ENCODE measurements at regions of chr2 and their contacts with region 1.

Region 1: GRCh38 chr2:120693121-120693520 is 42.5 kb upstream of the GLI2 start:
- DNase-seq: no peak
- ATAC-seq: no peak
- H3K4me3 ChIP-seq: no peak overlapping the region
- H3K27ac ChIP-seq: no peak overlapping the region
- H3K4me1 ChIP-seq: no peaks in the 10 kb centered on the region
- H3K27me3 ChIP-seq: peaks cover 0 to 29% (median 4%) of the 10 kb centered on the region in 3 donors
- CTCF ChIP-seq: no peak

Region 2: DNA sequence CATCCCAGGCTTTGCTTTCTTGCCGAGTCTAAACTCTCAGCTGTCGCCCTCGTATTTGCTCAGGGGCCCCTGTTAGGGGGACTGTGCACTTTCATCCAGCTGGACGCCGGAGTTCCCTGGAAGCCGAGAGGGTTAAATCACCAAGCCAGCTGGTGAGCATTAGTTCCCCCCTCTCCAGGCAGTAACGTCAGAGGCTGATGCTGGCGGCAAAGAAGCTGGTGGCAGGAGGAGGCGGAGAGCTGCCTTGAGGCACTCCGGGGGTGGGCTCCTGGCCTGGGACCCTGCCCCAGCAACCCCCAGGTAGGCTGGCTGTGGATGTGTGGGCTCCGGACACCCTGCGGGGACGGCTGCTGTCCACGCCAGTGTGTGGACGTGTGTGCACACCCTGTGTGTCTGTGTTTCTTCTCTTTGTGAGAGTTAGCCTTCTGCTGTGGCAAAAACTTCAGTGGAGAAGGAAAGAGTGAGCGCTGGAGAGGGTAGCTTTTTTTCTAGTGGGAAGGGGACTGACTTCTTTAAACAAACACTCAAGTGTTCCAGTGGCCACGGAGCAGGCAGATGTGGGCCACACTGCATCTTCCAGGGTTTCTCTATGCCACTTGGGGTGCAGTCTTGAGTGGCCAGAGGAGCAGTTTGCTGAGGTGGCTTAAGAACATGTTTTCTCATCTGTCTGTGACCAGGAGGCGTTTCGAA is 127.3 kb after region 1 on chr2:
- intact Hi-C with region 1: no loop called
- DNase-seq: peak in 1 of 2 donors; percentile 59
- ATAC-seq: peak in 2 of 4 donors; percentile 21 to 40
- H3K4me3 ChIP-seq: no peak overlapping the region
- H3K27ac ChIP-seq: peak overlapping the region; percentile 36
- H3K4me1 ChIP-seq: no peaks in the 10 kb centered on the region
- H3K27me3 ChIP-seq: peaks cover 0 to 3% (median 0%) of the 10 kb centered on the region in 3 donors
- CTCF ChIP-seq: no peak

Region 3: DNA sequence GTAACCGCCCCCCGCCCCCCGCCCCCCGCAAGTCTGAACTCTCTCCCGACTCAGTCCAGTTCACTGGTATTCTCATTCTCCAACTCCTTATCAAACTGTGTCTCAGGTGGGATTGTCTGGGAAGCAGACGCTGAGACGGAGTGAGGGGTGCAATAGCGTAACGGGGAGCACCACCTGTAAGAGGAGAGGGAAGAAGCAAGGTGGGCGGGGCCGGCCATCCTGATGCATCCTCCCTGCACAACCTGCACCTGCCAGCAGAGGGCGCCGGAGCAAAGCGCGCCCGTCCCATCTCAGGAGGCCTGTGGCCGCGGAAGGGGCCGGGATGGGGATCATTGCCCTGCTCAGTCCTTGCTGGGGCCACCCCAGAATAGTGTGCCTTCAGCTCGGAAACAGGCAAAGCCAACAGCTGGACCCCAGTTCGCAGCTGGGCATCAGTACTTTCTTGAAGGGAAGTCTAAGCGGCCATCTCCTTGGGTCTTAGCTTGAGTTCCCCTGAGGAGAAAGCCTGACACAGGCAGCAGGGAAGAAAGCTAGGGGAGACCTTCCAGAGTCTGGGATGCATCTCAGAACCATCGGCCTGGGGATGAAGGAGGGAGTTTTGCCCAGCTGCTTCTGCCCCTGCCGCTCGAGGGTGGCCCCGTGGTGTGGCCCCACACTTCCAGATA is 383.9 kb after region 1 on chr2:
- intact Hi-C with region 1: loop called in 1 of 2 experiments (anchors 1 kb)
- DNase-seq: peak; percentile 70 to 81
- ATAC-seq: peak; percentile 67 to 84 (median 75)
- H3K4me3 ChIP-seq: no peak overlapping the region
- H3K27ac ChIP-seq: no peak overlapping the region
- H3K4me1 ChIP-seq: no peaks in the 10 kb centered on the region
- H3K27me3 ChIP-seq: peaks cover 0 to 16% (median 9%) of the 10 kb centered on the region in 3 donors
- CTCF ChIP-seq: peak; percentile 89

Region 4: DNA sequence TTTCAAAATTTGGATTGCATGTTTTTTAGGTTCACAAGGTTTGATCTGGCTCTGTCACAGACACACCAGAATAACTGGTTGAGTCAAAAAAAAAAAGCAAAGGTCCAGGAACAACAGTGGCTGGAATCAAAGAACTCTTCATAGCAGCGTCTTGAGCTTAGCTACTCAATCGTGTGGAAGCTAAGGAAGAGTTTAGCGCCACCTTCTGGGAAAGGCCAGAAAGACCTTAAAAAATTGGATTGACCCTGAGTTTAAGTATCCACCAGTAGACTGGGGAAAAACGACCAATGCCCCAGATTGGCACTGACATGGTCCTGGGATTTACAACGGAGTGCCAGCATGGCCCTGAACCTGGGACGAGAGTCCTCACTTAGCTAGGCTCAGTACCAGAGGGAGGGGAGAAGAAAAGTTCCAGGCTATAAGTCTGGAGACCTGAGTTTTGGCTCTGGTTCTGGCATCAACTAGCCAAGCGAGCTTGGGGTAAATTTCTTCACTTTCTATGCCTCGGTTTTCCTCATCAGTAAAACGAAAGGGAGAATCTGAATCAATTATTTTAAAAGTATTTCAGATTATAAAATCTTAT is 663.0 kb after region 1 on chr2:
- intact Hi-C with region 1: loop called in 1 of 2 experiments (anchors 10 kb)
- DNase-seq: no peak
- ATAC-seq: peak; percentile 42 to 69 (median 59)
- H3K4me3 ChIP-seq: no peak overlapping the region
- H3K27ac ChIP-seq: no peak overlapping the region
- H3K4me1 ChIP-seq: peaks cover 28% of the 10 kb centered on the region
- H3K27me3 ChIP-seq: no peaks in the 10 kb centered on the region
- CTCF ChIP-seq: peak; percentile 64